Panc1 (cell line): ENCODE measurements at regions of chr11 and their contacts with region 1.

Region 1: DNA sequence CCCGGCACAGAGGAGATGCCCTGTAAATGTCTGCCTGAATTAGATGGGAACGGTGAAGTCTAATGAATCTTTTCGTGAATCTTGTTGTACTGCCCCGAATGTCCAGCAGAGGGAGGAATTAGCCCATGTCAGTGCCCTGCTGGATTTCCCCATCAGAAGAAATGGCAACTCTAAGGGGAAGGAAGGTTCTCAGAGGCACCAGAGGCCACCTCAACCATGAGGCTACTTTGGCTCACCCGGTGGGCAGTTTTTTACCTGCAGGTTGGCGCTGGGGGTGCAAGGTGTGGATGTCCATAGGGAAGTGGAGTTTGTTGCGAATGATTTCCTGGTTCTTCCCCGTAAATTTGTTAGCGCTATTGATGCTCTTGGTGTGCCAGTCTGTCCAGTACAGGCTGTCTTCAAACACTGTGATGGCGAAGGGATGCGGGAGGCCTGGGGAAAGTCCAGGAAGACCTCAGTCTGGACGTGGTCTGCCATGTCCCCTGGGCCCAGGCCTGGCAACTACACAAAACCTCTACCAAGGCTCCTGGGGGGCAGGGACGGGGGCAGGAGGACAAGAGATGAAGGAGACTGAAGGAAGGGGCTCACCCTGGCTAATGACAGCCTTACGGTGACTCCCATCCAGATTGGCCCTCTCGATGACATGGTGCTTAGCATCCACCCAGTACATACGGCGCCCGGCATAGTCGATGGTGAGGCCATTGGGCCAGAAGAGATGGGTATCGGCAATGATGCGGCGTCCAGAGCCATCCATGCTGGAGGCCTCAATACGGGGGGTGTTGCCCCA is 28.5 kb downstream of the LRP4 start:
- DNase-seq: peak; percentile 72
- ATAC-seq: peak; percentile 90
- H3K4me3 ChIP-seq: no peak overlapping the region
- H3K27ac ChIP-seq: no peak overlapping the region
- H3K4me1 ChIP-seq: no peaks in the 10 kb centered on the region
- H3K27me3 ChIP-seq: no peaks in the 10 kb centered on the region
- CTCF ChIP-seq: peak; percentile 92

Region 2: DNA sequence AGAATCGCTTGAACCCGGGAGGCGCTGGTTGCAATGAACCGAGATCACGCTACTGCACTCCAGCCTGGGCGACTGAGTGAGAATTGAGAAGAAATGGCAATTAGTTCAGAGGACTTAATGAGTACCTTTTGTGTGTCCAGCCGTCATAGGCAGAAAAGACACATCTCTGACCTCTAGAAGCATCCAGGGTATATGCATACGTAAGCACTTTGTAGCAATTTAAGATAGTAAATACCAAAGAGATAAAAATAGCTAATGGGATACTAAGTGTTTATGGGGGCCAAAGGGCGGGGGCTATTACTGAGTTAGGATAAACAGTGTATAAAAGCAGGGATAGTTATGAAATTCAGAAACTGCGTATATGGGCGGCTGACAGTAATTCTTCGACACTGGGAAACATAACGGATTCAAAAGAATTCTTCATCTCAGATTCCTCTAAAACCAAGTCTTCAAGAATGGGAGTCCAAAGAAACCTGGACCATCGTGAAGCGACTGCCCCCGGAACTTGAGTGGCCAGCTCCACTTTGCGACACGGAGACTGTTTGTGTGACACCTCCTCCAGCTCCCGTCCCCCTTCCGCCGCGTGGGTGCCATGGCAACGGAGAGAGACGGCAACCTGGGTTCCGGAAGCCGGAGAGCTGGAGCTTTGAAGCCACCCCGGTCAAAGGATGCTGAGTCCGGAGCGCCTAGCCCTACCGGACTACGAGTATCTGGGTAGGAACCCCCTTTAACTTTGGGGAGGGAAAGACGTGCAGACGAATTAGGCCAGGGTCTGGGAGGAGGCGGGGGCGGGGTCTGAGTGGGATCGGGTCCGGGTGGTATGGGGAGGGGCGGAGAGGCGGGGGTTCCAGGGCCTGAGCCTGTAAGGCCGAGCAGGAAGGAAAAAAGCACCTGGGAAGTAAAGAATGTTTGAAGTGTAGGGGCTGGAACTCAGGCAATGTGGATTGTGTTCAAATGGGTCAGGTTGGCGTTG is 46.5 kb after region 1 on chr11 and contains the start of gene CSTPP1:
- CTCF ChIA-PET with region 1: no interaction called
- POLR2A ChIA-PET with region 1: no interaction called
- in situ Hi-C with region 1: no loop called
- intact Hi-C with region 1: no loop called
- DNase-seq: peak; percentile 48
- ATAC-seq: peak; percentile 98
- H3K4me3 ChIP-seq: peak within 1 kb of the TSS; percentile 70 to 72
- H3K27ac ChIP-seq: peak within 1 kb of the TSS; percentile 78
- H3K4me1 ChIP-seq: no peaks in the 10 kb centered on the region
- H3K27me3 ChIP-seq: no peaks in the 10 kb centered on the region; the same call in 1 of the 2 replicates
- CTCF ChIP-seq: no peak
- total RNA-seq, gene CSTPP1: 29.0 TPM

Region 3: GRCh38 chr11:47152953-47153950 is 263.4 kb after region 1 on chr11:
- CTCF ChIA-PET with region 1: interaction called, 5 read pairs
- POLR2A ChIA-PET with region 1: no interaction called
- in situ Hi-C with region 1: no loop called
- intact Hi-C with region 1: loop called (anchors 1 kb)
- DNase-seq: no peak
- ATAC-seq: peak; percentile 88
- H3K4me3 ChIP-seq: no peak overlapping the region
- H3K27ac ChIP-seq: no peak overlapping the region
- H3K4me1 ChIP-seq: peaks cover 4% of the 10 kb centered on the region; the same call in 1 of the 2 replicates
- H3K27me3 ChIP-seq: no peaks in the 10 kb centered on the region
- CTCF ChIP-seq: peak; percentile 97

Region 4: GRCh38 chr11:47161134-47161854 is 271.4 kb after region 1 on chr11:
- CTCF ChIA-PET with region 1: no interaction called
- POLR2A ChIA-PET with region 1: no interaction called
- in situ Hi-C with region 1: no loop called
- intact Hi-C with region 1: loop called (anchors 1 kb)
- DNase-seq: no peak
- ATAC-seq: peak; percentile 88
- H3K4me3 ChIP-seq: no peak overlapping the region
- H3K27ac ChIP-seq: no peak overlapping the region
- H3K4me1 ChIP-seq: peaks cover 5% of the 10 kb centered on the region; the same call in 1 of the 2 replicates
- H3K27me3 ChIP-seq: no peaks in the 10 kb centered on the region
- CTCF ChIP-seq: peak; percentile 89

Region 5: DNA sequence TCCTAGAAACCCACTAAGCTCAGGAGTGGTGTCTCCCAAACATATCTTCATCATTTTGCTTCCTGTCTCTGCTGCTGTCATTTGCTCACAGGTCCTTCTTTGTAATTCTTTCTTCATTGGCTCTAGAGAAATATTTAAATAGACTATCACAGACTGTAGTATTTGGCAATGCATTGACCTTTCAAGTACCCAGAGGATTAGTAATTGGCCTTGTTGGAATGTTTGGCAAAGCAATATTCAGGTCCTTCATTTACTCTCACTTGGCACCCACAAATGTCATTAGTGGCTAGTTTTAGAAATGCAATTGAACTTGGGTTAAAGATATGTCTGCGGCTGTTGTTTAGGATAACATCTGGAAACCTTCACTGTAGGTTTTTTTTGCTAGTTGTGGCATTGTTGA is 1464.8 kb after region 1 on chr11:
- CTCF ChIA-PET with region 1: no interaction called
- POLR2A ChIA-PET with region 1: no interaction called
- in situ Hi-C with region 1: no loop called
- intact Hi-C with region 1: no loop called
- DNase-seq: no peak
- ATAC-seq: no peak
- H3K4me3 ChIP-seq: no peak overlapping the region
- H3K27ac ChIP-seq: no peak overlapping the region
- H3K4me1 ChIP-seq: no peaks in the 10 kb centered on the region
- H3K27me3 ChIP-seq: no peaks in the 10 kb centered on the region
- CTCF ChIP-seq: no peak